ENCODE measurements at regions of chr3 and their contacts with region 1.

Region 1: DNA sequence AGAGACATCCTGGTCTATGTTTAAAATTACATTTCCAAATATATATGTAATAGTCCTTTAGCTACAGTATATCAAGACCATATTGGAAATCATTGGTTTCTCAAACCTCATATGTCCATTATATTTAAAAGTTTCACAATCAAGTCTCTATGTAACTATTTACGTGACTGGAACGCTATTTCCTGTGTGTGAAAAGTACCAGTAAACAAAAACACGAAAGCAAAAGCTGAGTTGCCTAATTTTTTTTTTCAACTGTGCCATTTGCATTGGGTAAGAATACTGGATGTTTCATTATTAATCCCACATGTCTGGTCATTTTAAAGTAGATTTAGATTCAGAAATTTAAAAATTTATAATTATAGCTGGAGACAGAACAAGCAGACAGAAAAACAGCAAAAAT is 381.4 kb downstream of the TBC1D5 start:
- DNase-seq: no peak
- H3K4me3 ChIP-seq: no peak overlapping the region
- H3K27ac ChIP-seq: no peak overlapping the region
- H3K4me1 ChIP-seq: no peaks in the 10 kb centered on the region
- H3K27me3 ChIP-seq: no peaks in the 10 kb centered on the region
- CTCF ChIP-seq: no peak
- POLR2A ChIP-seq: no peak

Region 2: DNA sequence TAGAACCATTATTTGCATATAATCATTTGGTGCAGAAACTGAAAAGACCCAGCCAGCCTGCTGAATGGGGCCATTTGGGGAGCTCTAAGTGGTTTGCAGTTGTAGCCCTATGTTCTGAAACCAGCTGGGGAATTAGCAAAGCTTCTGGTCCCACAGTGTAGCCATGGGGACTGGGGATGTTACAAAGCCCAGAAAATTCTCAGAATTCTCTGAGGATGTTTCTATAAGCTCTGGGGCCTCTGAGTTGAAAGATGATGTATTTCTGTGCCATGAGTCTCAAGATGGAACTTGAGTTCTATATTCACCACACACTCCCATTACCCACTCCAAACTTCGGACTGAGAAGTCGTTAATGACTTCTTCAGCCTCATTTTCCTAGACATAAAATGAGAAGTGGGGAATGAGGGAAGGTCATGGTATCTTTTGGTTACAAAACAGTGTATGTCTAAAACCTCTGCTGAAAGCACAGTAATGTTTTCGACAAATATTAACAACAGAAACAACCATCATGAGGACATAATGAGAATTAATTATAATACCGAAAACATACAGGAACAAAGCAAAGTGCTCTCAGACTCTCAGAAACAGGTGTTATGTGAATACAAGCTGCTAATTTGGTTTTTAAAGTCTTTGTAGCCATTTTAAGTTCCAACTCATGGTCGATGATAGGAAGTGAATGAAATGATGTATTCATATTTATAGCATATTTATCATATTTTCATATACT is 936.9 kb before region 1 on chr3:
- CTCF ChIA-PET with region 1: no interaction called
- POLR2A ChIA-PET with region 1: no interaction called
- dilution Hi-C with region 1: no loop called
- intact Hi-C with region 1: no loop called
- DNase-seq: no peak
- H3K4me3 ChIP-seq: no peak overlapping the region
- H3K27ac ChIP-seq: no peak overlapping the region
- H3K4me1 ChIP-seq: peaks cover 6% of the 10 kb centered on the region
- H3K27me3 ChIP-seq: no peaks in the 10 kb centered on the region
- CTCF ChIP-seq: no peak
- POLR2A ChIP-seq: no peak

Region 3: GRCh38 chr3:17175187-17175804 is 185.7 kb before region 1 on chr3:
- CTCF ChIA-PET with region 1: no interaction called
- POLR2A ChIA-PET with region 1: no interaction called
- dilution Hi-C with region 1: no loop called
- intact Hi-C with region 1: no loop called
- DNase-seq: no peak
- H3K4me3 ChIP-seq: no peak overlapping the region
- H3K27ac ChIP-seq: no peak overlapping the region
- H3K4me1 ChIP-seq: no peaks in the 10 kb centered on the region
- H3K27me3 ChIP-seq: no peaks in the 10 kb centered on the region
- CTCF ChIP-seq: no peak
- POLR2A ChIP-seq: no peak

Region 4: GRCh38 chr3:17372362-17373210 is 11.6 kb after region 1 on chr3:
- CTCF ChIA-PET with region 1: interaction called, 3 read pairs
- POLR2A ChIA-PET with region 1: no interaction called
- dilution Hi-C with region 1: no loop called
- intact Hi-C with region 1: loop called (anchors 1 kb)
- DNase-seq: peak; percentile 6
- H3K4me3 ChIP-seq: no peak overlapping the region
- H3K27ac ChIP-seq: no peak overlapping the region
- H3K4me1 ChIP-seq: no peaks in the 10 kb centered on the region
- H3K27me3 ChIP-seq: no peaks in the 10 kb centered on the region
- CTCF ChIP-seq: no peak
- POLR2A ChIP-seq: no peak